ENCODE measurements at regions of chr15 and their contacts with region 1.

Region 1: DNA sequence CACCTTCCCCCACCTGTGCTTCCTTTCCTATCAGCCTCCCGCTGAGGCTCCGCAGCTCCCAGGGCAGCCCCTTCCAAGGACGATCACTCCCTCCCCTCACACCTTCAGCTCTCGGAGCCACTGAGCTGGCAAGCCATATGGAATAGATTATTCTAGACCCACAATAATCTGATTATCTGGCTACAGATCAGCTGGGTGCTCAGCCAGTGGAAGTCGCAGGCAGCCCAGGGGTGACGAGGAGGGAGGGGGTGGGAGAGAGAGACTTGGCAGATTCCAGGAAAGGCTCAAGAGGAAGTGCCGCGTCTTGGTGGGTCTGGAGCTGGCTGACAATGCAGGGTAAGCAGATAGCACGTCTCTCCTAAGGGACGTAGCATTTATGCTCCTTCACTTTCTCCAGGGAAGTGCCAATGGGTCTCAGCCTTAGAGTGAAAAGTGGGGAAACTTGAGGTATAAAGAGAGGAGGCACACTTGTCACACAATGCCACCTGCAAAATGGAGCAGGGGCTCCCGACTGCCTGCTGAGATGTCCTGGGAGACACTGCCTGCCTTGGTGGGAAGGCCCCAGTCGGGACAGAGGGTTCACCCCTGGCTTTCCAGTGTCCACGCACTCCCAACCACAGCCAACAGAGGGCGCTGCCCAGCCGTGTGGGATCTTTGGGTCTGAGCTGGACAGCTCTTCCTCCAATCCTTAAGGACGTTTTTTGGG is 9.4 kb upstream of the MESP1 start:
- DNase-seq: peak in 1 of 2 experiments; percentile 85
- H3K4me3 ChIP-seq: no peak overlapping the region
- H3K27ac ChIP-seq: peak overlapping the region; percentile 98
- H3K4me1 ChIP-seq: peaks cover 61% of the 10 kb centered on the region
- H3K27me3 ChIP-seq: no peaks in the 10 kb centered on the region
- CTCF ChIP-seq: peak; percentile 93

Region 2: GRCh38 chr15:89521605-89522004 is 238.9 kb before region 1 on chr15:
- CTCF ChIA-PET with region 1: no interaction called
- POLR2A ChIA-PET with region 1: no interaction called
- intact Hi-C with region 1: no loop called
- DNase-seq: no peak
- H3K4me3 ChIP-seq: no peak overlapping the region
- H3K27ac ChIP-seq: no peak overlapping the region
- H3K4me1 ChIP-seq: no peaks in the 10 kb centered on the region
- H3K27me3 ChIP-seq: no peaks in the 10 kb centered on the region
- CTCF ChIP-seq: no peak

Region 3: GRCh38 chr15:89714775-89715174 is 45.7 kb before region 1 on chr15:
- CTCF ChIA-PET with region 1: no interaction called
- POLR2A ChIA-PET with region 1: no interaction called
- intact Hi-C with region 1: no loop called
- DNase-seq: no peak
- H3K4me3 ChIP-seq: no peak overlapping the region
- H3K27ac ChIP-seq: no peak overlapping the region
- H3K4me1 ChIP-seq: no peaks in the 10 kb centered on the region
- H3K27me3 ChIP-seq: no peaks in the 10 kb centered on the region
- CTCF ChIP-seq: no peak

Region 4: GRCh38 chr15:89794627-89795241 is 34.3 kb after region 1 on chr15:
- CTCF ChIA-PET with region 1: no interaction called
- POLR2A ChIA-PET with region 1: no interaction called
- intact Hi-C with region 1: loop called (anchors 5 kb)
- DNase-seq: no peak
- H3K4me3 ChIP-seq: no peak overlapping the region
- H3K27ac ChIP-seq: peak overlapping the region; percentile 23
- H3K4me1 ChIP-seq: peaks cover 9% of the 10 kb centered on the region
- H3K27me3 ChIP-seq: no peaks in the 10 kb centered on the region
- CTCF ChIP-seq: no peak

Region 5: GRCh38 chr15:89820666-89821611 is 60.5 kb after region 1 on chr15:
- CTCF ChIA-PET with region 1: no interaction called
- POLR2A ChIA-PET with region 1: no interaction called
- intact Hi-C with region 1: loop called (anchors 1 kb)
- DNase-seq: peak in 1 of 2 experiments; percentile 88
- H3K4me3 ChIP-seq: peak overlapping the region; percentile 31; the same call in 1 of the 2 replicates
- H3K27ac ChIP-seq: peak overlapping the region; percentile 94
- H3K4me1 ChIP-seq: peaks cover 75% of the 10 kb centered on the region
- H3K27me3 ChIP-seq: no peaks in the 10 kb centered on the region
- CTCF ChIP-seq: no peak

Region 6: DNA sequence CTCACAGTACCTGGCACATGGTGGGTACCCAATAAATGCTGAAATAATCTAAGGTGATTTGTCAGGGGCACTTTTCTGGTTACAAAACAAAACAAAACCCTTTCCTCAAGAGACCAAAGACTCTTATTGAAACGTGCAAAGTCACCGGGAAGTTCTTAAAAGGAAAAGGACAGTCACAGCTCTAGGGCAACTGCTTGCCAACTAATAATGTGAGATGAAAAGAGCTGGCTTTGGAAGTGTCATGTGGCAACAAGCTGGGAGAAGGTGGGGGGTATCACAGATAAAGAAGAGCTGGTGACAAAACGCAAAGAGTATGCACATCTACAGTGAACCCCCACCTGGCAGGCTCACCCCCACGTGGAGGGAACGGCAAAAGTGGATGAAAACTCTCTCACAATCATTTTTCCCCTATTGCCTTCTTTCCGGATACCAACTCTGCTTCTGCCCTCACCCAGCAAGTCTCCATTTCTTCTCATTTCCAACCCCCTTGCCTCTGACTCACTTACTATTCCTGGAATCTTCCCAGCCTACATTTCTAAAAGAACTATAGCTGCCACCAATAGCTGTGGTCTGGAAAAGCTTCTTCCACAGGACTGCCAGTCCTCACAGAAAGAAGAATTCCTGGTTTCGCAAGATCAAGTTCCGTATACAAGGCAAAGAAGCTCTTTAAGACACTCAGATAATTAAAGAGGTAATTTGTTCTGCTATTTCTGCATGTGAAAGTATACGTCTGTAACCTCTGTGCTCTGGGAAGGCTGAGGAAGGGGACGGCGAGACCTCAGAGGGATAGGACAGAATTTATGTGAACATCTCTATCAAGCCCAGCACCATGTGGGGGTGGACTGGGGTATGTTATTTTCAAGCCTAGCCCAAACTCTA is 76.0 kb after region 1 on chr15:
- CTCF ChIA-PET with region 1: interaction called, 14 read pairs
- POLR2A ChIA-PET with region 1: interaction called, 10 read pairs
- intact Hi-C with region 1: loop called (anchors 1 kb)
- DNase-seq: peak; percentile 60 to 96
- H3K4me3 ChIP-seq: peak overlapping the region; percentile 9; the same call in 1 of the 2 replicates
- H3K27ac ChIP-seq: peak overlapping the region; percentile 97
- H3K4me1 ChIP-seq: peaks cover 48% of the 10 kb centered on the region
- H3K27me3 ChIP-seq: no peaks in the 10 kb centered on the region
- CTCF ChIP-seq: no peak

Region 7: DNA sequence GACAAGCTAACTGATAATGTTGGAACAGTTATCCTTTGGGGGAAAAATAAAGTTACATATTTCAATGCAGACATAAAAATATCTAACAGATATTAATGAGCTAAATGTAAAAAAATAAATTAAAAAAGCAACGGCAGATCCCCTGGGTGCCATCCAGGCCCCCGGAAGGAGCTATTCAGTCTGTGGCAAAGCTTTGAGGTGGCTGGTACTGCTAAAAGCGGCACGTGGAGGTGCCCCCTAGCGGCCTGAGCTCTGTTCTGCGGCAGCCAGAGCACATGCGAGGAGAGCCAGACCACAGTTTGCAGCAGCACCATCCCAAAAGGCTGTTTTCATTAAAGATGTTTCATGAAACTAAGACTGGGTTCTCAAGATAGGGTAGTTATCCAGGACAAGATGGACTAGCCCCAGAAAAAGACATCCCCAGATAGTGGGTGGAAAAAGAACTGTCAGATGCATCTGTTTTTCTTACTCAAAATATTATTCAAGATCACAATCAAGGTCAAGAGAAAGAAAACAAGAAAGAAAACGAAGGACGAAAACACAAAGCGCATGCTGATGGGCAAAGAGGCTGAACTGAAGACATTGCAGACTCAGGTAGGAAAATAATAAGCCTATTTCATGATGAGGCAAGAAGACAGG is 114.6 kb after region 1 on chr15:
- CTCF ChIA-PET with region 1: interaction called, 45 read pairs
- POLR2A ChIA-PET with region 1: no interaction called
- intact Hi-C with region 1: loop called (anchors 2 kb)
- DNase-seq: peak; percentile 55 to 77
- H3K4me3 ChIP-seq: no peak overlapping the region
- H3K27ac ChIP-seq: peak overlapping the region; percentile 22; the same call in 1 of the 2 replicates
- H3K4me1 ChIP-seq: no peaks in the 10 kb centered on the region
- H3K27me3 ChIP-seq: no peaks in the 10 kb centered on the region
- CTCF ChIP-seq: peak; percentile 95

Region 8: GRCh38 chr15:89912674-89913396 is 152.4 kb after region 1 on chr15 and contains the start of gene ARPIN:
- CTCF ChIA-PET with region 1: no interaction called
- POLR2A ChIA-PET with region 1: no interaction called
- intact Hi-C with region 1: no loop called
- DNase-seq: peak in 1 of 2 experiments; percentile 49
- H3K4me3 ChIP-seq: peak within 1 kb of the TSS; percentile 96
- H3K27ac ChIP-seq: peak within 1 kb of the TSS; percentile 59
- H3K4me1 ChIP-seq: peaks cover 60% of the 10 kb centered on the region
- H3K27me3 ChIP-seq: no peaks in the 10 kb centered on the region
- CTCF ChIP-seq: no peak
- total RNA-seq, gene ARPIN: 28.6 and 30.4 TPM in 2 replicates